ENCODE measurements at regions of chr13 and their contacts with region 1.

Region 1: DNA sequence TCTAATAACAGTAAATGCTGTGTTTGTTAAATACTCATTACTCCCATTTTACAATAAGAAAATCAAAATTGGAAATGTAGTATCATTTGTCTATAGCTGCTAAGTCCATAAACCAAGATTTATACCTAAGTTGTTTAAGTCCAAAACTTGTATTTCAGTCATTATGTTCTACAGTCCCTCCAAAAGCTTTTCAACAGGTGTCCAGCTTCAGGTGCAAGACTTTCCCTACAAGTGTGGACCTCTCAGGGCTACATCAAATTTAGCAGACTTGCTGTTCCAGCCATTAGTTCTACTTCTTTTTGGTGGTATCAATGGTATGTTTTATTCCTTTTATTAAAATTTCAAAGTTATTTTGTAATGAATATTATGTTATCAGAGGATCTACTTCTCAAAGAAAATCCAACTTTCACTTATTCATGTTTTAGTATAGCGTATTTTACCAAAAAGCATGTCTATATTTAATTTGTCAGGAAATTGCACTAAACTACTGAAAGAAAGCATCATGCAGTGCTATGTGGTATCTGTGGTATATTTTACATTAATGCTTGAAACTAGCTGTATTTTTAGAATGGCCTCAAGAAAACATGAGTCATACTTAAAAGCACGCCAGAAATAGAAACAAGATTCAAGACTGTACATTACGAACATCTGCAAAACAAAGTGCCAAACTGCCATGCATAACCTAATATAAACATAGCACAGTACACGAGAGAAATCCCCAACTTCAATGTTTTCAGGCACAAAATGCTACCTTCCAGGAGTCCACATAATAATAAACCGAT is 44.5 kb downstream of the VWA8 start:
- DNase-seq: no peak
- H3K4me3 Mint-ChIP-seq: peak overlapping the region; percentile 59
- H3K27ac Mint-ChIP-seq: peak overlapping the region; percentile 95
- H3K4me1 Mint-ChIP-seq: peaks cover 60% of the 10 kb centered on the region
- H3K27me3 Mint-ChIP-seq: no peaks in the 10 kb centered on the region

Region 2: DNA sequence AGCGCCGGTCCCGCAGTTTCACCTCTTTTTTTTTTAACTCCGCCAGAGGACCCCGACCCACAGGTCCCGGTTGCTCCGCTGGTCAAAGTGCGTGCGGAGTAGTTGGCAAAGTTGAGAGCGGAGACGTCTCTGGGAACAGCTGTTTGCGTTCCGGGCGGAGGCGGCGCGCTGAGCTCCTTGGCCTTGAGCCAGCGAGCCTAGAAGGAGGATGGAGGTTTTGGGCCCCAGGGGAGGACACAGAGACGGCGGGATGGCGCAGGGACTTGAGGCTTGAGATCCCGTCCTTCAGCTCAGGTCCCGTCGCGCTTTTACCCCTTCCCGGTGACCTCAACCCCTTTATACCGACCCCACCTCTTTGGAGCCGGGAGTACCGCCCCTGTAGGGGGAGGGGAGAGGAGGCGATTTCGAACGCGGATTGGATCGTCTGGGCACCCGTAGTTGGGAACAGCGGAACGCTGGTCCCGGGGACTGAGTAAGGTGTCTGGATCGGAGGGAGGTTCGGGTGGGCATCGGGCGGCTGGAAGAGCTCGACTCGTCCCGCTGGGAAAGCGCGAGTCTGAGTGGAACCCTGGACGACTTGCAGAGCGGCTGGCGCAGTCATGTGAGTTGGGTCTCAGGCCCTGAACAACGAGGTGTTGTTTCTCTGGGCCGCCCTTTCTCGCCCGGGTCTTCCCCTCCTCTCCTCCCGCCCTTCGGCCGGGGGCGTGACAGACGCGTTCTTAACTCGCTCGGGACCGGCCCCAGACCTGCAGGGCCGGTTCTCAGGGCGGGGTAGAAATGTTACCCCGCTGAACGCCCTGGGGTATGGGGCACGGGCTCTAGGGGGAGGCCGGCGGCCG is 855.1 kb before region 1 on chr13 and contains the start of gene WBP4:
- CTCF ChIA-PET with region 1: no interaction called
- intact Hi-C with region 1: loop called (anchors 5 kb)
- DNase-seq: peak; percentile 88
- H3K4me3 Mint-ChIP-seq: peak within 1 kb of the TSS; percentile 95
- H3K27ac Mint-ChIP-seq: peak within 1 kb of the TSS; percentile 98
- H3K4me1 Mint-ChIP-seq: peaks cover 45% of the 10 kb centered on the region
- H3K27me3 Mint-ChIP-seq: peaks cover 4% of the 10 kb centered on the region
- total RNA-seq, gene WBP4: 8.1 to 8.2 TPM

Region 3: GRCh38 chr13:41465241-41465847 is 451.0 kb before region 1 on chr13:
- CTCF ChIA-PET with region 1: no interaction called
- intact Hi-C with region 1: loop called (anchors 1 kb)
- DNase-seq: peak; percentile 97
- H3K4me3 Mint-ChIP-seq: peak overlapping the region; percentile 76
- H3K27ac Mint-ChIP-seq: peak overlapping the region; percentile 93
- H3K4me1 Mint-ChIP-seq: peaks cover 89% of the 10 kb centered on the region
- H3K27me3 Mint-ChIP-seq: no peaks in the 10 kb centered on the region

Region 4: GRCh38 chr13:41931337-41931736 is 15.0 kb after region 1 on chr13:
- CTCF ChIA-PET with region 1: interaction called, 10 read pairs
- intact Hi-C with region 1: loop called (anchors 1 kb)
- DNase-seq: no peak
- H3K4me3 Mint-ChIP-seq: no peak overlapping the region
- H3K27ac Mint-ChIP-seq: peak overlapping the region; percentile 81
- H3K4me1 Mint-ChIP-seq: peaks cover 77% of the 10 kb centered on the region
- H3K27me3 Mint-ChIP-seq: no peaks in the 10 kb centered on the region

Region 5: DNA sequence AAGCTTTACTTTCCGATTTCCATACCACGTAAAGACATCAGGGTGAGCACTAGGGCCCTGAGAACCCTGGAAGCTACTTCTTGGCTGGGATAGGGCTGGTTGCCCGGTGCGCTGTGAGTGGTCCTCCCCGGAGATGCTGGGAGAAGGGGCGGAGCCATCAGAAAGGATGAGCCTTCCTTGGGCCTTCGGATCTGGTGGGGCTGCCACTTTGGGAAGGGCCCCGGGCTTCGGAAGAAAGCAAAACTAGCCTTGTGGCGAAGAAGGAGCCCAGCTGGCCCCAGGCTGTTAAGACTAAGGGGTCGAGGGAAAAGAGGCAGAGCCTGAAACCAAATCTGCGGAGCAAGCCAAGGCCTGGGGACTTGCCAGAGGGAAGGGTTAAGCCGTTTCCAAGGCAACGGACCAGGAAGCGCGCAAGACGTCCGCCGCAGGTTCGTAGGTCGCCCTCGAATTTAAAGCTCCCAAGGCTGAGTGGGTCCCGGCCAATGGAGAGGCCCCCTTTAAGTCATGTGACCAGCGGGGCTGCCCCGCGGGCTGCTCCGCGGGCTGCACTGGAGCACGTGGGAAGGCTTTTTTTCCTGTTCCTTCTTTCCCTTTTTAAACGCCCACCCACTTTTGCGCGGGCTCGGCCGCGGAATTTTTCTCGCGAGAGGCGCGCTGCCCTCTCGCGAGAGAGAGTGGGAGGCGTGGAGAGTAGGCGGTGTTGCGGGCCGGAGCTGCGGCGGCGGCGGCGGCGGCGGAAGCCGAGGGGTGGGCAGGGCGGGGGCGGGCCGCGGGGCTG is 355.2 kb after region 1 on chr13:
- CTCF ChIA-PET with region 1: no interaction called
- intact Hi-C with region 1: loop called (anchors 5 kb)
- DNase-seq: peak; percentile 95
- H3K4me3 Mint-ChIP-seq: peak overlapping the region; percentile 94
- H3K27ac Mint-ChIP-seq: peak overlapping the region; percentile 88
- H3K4me1 Mint-ChIP-seq: peaks cover 46% of the 10 kb centered on the region
- H3K27me3 Mint-ChIP-seq: no peaks in the 10 kb centered on the region

Region 6: DNA sequence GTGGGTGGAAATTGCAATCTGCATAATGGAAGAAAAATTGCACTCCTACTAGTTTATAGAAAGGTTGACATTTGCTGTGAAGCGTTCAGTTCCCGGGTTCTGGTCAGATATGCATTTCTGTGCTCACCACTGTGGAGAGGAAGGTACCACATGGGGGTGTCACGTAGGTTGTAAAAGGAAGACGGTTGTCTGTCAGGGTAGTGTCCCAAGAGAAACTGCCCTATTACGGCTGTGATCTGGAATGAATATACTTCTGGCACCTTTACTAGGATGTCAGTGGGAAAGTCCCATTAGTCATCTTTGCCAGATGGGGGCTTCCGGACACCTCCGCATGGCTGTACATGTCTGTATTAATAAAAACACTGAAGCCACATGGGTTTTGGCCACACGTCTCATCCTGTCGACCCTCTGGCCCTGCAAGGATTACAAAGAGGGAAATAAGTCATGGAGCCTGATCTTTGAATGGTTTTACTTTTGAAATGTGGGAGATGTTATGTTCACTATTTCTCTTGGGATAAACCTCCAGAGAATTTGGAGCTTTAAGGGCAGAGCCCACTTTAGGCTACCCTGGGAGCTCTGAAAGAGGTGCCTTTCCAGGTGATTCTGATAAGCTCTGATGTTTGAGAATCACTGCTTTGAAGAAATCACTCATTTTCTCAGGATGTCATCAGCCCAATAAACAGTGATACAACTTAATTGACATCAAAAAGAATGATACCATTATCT is 489.5 kb after region 1 on chr13:
- CTCF ChIA-PET with region 1: interaction called, 3 read pairs
- intact Hi-C with region 1: loop called (anchors 2 kb)
- DNase-seq: peak; percentile 87
- H3K4me3 Mint-ChIP-seq: peak overlapping the region; percentile 51
- H3K27ac Mint-ChIP-seq: peak overlapping the region; percentile 96
- H3K4me1 Mint-ChIP-seq: peaks cover 41% of the 10 kb centered on the region
- H3K27me3 Mint-ChIP-seq: no peaks in the 10 kb centered on the region